BJ (cell line): ENCODE measurements at regions of chr15 and their contacts with region 1.

Region 1: GRCh38 chr15:48285329-48286214 is 45.7 kb upstream of the DUT start:
- DNase-seq: peak; percentile 33
- H3K4me3 ChIP-seq: no peak overlapping the region
- H3K27me3 ChIP-seq: 0 out of 2 replicates have a peak, but pooled peaks cover 2% of the 10 kb centered on the region
- CTCF ChIP-seq: peak; percentile 71

Region 2: DNA sequence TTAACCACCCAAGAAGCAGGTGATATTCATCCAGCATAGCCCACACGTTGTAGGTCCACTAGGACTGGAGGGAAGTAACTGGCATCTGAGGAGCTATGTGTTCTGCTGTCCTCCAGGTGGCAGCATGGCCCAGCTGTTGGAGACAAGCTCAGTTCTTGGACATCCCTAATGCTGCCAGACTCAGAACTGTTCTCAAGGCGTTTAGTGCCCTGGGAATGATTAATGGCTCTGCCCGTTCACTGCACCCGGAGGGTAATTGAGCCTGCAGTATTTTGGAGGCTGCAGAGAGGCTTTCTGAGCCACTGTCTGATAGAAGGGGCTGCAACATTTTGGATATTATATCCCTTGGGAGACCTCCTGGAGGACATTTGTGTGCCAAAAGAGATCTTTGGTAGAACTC is 1089.5 kb before region 1 on chr15:
- CTCF ChIA-PET with region 1: interaction called, 10 read pairs
- POLR2A ChIA-PET with region 1: no interaction called
- DNase-seq: peak; percentile 11
- H3K4me3 ChIP-seq: no peak overlapping the region
- H3K27me3 ChIP-seq: no peaks in the 10 kb centered on the region
- CTCF ChIP-seq: peak; percentile 84

Region 3: GRCh38 chr15:48298914-48299313 is 13.3 kb after region 1 on chr15:
- CTCF ChIA-PET with region 1: interaction called, 21 read pairs
- POLR2A ChIA-PET with region 1: no interaction called
- DNase-seq: no peak
- H3K4me3 ChIP-seq: no peak overlapping the region
- H3K27me3 ChIP-seq: no peaks in the 10 kb centered on the region
- CTCF ChIP-seq: no peak

Region 4: GRCh38 chr15:48759921-48760320 is 474.3 kb after region 1 on chr15:
- CTCF ChIA-PET with region 1: no interaction called
- POLR2A ChIA-PET with region 1: interaction called, 18 read pairs
- DNase-seq: no peak
- H3K4me3 ChIP-seq: no peak overlapping the region
- H3K27me3 ChIP-seq: no peaks in the 10 kb centered on the region
- CTCF ChIP-seq: no peak